Activated CD4-positive, alpha-beta T cell treated with anti-CD3 and anti-CD28 coated beads for 36 hours (primary cell): ENCODE measurements at regions of chrX and their contacts with region 1.

Region 1: GRCh38 chrX:9942086-9942485 is 25.1 kb upstream of the CLDN34 start:
- DNase-seq: peak; percentile 80
- ATAC-seq: peak; percentile 90
- H3K4me3 Mint-ChIP-seq: peak overlapping the region; percentile 35
- H3K27ac Mint-ChIP-seq: peak overlapping the region; percentile 51
- H3K4me1 Mint-ChIP-seq: peaks cover 14% of the 10 kb centered on the region
- H3K27me3 Mint-ChIP-seq: peaks cover 21% of the 10 kb centered on the region

Region 2: DNA sequence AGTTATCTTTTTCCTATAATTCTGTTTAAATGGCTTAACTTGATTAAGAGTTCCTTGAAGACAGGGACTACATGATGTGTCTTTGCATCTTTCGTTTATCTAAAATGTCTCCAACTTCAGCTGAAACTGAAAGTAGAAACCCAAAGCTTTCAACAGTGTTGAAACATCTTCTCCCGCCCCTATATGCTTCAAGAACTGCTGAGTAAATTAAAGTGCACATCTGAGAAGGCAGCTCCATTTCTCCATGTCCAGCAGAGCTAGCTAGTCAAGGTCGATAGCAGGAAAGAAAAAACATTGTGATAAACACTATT is 662.9 kb before region 1 on chrX:
- CTCF ChIA-PET with region 1: no interaction called
- POLR2A ChIA-PET with region 1: no interaction called
- intact Hi-C with region 1: no loop called
- DNase-seq: no peak
- ATAC-seq: peak; percentile 66
- H3K4me3 Mint-ChIP-seq: no peak overlapping the region
- H3K27ac Mint-ChIP-seq: peak overlapping the region; percentile 17
- H3K4me1 Mint-ChIP-seq: peaks cover 15% of the 10 kb centered on the region
- H3K27me3 Mint-ChIP-seq: no peaks in the 10 kb centered on the region

Region 3: DNA sequence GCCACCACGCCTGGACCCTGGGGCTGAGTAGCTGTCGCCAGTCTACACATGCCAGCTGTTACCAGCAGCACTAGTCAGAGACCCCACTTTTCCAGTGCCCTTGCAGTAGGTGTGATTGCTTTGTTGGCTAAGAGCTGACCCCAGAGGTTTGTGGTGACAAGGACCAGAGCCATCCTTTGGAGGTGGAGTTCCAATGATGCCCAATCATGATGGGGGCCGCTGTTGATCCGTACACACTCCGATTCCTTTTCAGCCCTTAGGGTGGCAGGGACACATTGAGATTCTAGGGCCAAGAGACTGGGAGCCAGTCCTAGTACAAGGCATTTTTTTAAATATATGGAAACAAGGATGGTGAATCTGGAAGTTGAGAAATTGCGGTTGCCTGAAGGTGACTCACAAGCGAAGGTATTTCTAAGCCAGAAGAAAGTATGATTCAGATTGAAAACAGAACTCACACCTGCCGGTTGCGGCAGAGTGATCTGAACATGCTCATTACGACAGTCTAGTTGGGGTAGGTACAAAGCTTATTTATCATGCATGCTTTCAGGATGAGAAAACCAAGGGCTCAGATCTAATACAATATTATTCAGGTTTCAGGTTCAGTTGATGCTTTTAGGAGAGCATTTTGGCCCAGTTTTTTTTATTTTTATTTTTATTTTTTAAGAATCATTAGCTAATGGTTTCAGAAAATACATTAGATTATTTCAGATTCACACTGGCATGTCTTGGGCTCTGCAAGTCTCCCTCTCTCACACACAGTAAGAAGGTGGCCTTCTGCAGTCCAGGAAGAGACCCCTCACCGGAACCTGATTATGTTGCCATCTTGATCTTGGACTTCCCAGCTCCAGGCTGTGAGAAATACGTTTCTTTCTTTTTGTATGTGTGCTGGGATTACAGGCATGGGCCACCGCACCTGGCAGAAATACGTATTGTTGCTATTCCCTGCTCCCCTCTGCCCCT is 112.5 kb before region 1 on chrX:
- CTCF ChIA-PET with region 1: no interaction called
- POLR2A ChIA-PET with region 1: no interaction called
- intact Hi-C with region 1: loop called in 1 of 2 experiments (anchors 2 kb)
- DNase-seq: peak; percentile 65
- ATAC-seq: peak; percentile 95
- H3K4me3 Mint-ChIP-seq: no peak overlapping the region
- H3K27ac Mint-ChIP-seq: no peak overlapping the region
- H3K4me1 Mint-ChIP-seq: peaks cover 7% of the 10 kb centered on the region
- H3K27me3 Mint-ChIP-seq: peaks cover 33% of the 10 kb centered on the region

Region 4: DNA sequence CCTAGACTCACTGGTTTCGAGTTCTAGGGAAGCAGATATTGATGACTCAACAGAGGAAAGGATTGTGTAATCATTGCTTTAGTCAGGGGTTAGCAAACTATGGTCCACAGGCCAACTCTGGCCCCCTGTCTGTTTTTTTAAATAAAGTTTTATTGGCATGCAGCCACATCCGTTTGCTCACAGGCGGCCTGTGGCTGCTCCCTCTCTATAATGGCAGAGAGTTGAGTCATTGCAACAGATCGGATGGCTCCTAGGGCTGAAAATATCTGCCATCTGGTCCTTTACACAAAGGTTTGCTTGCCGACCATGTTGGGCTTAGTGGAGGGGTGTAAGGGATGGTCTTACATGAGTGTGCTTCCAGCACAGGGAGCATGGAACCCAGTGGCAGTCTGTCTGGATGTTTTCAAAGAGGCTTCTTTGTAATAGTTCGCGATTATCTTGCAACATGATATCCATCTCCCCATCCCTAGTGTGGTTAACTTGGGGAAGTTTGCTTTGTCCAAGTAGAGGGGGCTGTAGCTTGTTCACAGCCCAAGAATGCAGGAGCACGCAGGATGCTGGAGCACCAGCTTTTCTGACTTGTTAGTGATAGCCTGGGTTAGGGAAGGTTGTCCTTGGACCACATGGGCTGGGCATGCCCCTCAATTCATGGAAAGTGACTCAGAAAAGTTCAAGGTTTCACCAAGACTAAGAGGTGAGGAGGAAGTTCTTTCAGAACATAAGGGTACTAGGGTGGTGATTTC is 34.3 kb before region 1 on chrX:
- CTCF ChIA-PET with region 1: no interaction called
- POLR2A ChIA-PET with region 1: no interaction called
- intact Hi-C with region 1: loop called (anchors 5 kb)
- DNase-seq: no peak
- ATAC-seq: no peak
- H3K4me3 Mint-ChIP-seq: no peak overlapping the region
- H3K27ac Mint-ChIP-seq: no peak overlapping the region
- H3K4me1 Mint-ChIP-seq: peaks cover 1% of the 10 kb centered on the region
- H3K27me3 Mint-ChIP-seq: peaks cover 11% of the 10 kb centered on the region